ENCODE measurements at regions of chr1 and their contacts with region 1.

Region 1: GRCh38 chr1:205711104-205712020 is 31.1 kb upstream of the SLC45A3 start:
- DNase-seq: peak; percentile 31
- H3K4me3 ChIP-seq: no peak overlapping the region
- CTCF ChIP-seq: peak; percentile 77

Region 2: GRCh38 chr1:205631727-205632373 is 79.5 kb before region 1 on chr1 and contains the start of gene ELK4:
- CTCF ChIA-PET with region 1: interaction called, 12 read pairs
- POLR2A ChIA-PET with region 1: no interaction called
- DNase-seq: peak; percentile 85
- H3K4me3 ChIP-seq: peak within 1 kb of the TSS; percentile 74
- CTCF ChIP-seq: peak; percentile 78

Region 3: DNA sequence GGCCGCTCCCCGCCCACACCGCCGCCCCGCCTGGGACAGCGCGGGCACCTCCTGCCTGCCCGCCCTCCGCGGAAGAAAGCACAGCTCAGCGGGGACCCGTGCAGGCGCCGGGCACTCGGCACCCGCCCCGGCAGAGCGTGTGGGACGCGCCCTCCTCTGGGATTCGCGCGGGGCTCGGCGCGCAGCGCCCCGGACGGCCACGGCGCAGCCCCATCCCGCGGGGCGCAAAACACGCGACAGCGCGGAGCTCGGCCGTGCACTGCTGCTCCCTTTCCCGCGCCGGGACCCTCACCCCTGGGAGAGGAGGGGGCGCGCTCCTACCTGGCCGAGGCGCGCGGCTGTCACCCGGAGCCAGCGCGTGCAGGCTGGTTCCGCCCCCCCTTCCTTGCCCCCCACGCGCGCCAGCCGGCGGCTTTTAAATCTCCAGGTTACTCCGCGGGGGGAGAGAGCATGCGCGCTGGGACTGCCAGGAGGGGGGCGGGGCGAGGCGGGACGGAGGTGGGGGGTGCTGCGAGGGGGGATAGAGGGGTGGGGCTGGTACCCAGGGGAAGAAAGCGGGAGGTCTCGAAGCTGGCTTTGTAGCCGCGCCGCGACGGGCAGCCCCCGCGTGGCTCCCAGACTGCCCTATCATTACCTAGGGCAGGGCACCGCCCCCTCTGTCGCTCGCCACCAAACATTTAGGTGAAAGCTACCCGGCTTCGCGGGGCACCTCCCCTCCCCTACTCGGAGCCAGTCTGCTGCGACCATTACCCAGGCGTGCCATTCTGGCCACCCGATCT is 31.1 kb before region 1 on chr1 and contains the start of gene SLC45A3:
- CTCF ChIA-PET with region 1: interaction called, 68 read pairs
- POLR2A ChIA-PET with region 1: no interaction called
- DNase-seq: no peak
- H3K4me3 ChIP-seq: peak within 1 kb of the TSS; percentile 66
- CTCF ChIP-seq: no peak

Region 4: DNA sequence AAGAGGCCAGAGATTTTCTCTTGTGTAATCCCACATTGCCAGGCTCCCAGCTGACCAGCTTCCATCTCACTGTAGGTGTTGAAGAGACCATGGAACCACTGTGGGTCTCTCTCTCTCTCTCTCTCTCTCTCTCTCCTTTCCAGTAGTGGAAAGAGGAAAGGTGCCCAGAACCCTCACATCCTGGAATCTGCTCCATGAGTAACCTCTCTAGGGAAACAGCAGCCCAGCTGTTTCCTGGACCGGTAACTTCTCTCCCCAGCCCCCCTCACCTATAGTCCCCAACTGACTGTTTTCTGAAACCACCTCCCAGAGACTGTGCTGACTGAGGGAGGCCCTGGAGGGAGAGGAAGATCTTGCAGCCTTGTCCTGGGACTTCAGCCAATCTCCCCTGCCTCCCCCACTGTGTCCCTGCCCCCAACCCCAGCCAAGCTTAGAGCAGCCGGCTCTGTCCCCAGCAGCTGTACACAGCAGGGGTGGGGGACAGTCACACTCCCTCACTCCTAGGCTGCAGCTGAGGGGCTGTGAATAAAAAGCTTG is 10.4 kb before region 1 on chr1:
- CTCF ChIA-PET with region 1: interaction called, 141 read pairs
- POLR2A ChIA-PET with region 1: no interaction called
- DNase-seq: no peak
- H3K4me3 ChIP-seq: no peak overlapping the region
- CTCF ChIP-seq: no peak

Region 5: GRCh38 chr1:205746757-205747412 is 35.5 kb after region 1 on chr1:
- CTCF ChIA-PET with region 1: interaction called, 362 read pairs
- POLR2A ChIA-PET with region 1: no interaction called
- DNase-seq: no peak
- H3K4me3 ChIP-seq: no peak overlapping the region; the same call in 1 of the 2 replicates
- CTCF ChIP-seq: no peak

Measured in AG04449 (cell line).